MCF 10A (cell line): ENCODE measurements at regions of chr1 and their contacts with region 1.

Region 1: DNA sequence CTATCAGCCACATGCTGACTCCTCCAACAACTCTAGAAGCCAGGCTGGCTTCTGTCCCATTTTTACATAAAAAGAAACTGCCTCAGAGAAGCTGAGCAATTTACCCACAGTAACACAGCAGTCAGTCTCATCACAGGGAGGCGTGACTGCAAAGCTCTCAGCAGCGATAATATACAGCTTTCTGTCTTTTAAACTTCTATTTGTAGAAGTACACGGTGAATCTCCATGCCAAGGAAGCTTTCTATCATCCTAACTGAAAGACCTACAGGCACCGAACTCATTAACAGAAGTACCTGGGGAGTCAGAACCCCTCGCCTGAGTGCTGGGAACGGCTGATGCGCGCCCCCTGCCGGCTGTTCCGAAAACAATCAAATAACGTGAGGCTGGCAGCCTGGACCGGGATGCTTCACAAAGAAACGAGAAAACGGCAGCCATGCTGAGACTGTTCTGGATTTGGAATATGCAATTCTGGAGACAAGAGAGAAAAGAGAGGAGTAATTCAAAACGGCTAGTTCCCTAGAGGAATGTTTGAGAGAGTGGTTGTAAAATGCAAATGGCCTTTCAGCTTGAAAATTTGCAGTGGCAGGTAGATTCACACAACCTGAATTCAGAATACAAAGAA is 43.5 kb upstream of the RAB4A start:
- DNase-seq: peak; percentile 94
- H3K4me3 Mint-ChIP-seq: peak overlapping the region; percentile 5
- H3K27ac Mint-ChIP-seq: peak overlapping the region; percentile 1
- H3K4me1 Mint-ChIP-seq: peaks cover 66% of the 10 kb centered on the region
- H3K27me3 Mint-ChIP-seq: no peaks in the 10 kb centered on the region
- CTCF ChIP-seq: peak; percentile 99

Region 2: DNA sequence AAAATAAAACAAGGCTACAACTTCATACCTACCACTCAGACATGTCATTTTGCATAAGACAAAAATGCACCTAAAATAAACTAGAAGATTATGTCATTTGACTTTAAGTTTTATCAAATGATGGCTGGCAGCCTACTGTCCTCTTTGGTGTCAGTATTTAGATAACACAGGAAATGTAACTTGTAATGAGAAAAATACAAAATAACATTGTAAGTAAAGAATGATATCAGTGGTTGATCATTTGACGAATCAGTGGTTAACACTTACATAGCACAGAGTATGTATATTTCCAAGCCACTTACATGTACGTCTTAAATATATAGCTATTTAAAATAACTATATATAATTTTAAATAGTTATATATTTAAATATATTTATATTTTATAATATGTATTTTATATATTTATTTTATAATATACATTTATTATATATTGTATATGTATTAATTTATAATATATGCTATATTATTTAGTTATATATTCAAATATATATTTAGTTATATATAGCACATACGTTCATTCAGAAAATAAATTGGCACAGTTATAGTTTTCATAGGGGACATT is 1620.0 kb before region 1 on chr1:
- CTCF ChIA-PET with region 1: no interaction called
- POLR2A ChIA-PET with region 1: no interaction called
- intact Hi-C with region 1: no loop called
- DNase-seq: no peak
- H3K4me3 Mint-ChIP-seq: no peak overlapping the region
- H3K27ac Mint-ChIP-seq: no peak overlapping the region
- H3K4me1 Mint-ChIP-seq: no peaks in the 10 kb centered on the region
- H3K27me3 Mint-ChIP-seq: no peaks in the 10 kb centered on the region
- CTCF ChIP-seq: no peak

Region 3: DNA sequence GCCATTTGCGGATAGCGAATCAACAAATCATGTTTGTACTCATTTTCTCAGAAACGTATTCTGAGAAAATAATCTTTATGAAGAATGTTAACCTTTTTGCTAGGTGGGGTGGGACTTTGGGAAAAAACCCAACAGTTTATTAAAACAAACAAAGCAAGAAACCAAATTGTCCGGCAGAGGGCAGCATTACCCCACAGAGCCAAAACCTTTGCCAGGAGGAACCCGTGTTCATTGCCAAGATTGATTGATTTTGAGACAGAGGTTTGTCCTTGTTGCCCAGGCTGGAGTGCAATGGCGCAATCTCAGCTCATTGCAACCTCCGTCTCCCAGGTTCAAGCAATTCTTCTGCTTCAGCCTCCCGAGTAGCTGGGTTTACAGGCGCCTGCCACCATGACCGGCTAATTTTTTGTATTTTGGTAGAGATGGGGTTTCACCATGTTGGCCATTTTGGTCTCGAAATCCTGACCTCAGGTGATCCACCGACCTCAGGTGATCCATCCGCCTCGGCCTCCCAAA is 563.0 kb before region 1 on chr1:
- CTCF ChIA-PET with region 1: interaction called, 94 read pairs
- POLR2A ChIA-PET with region 1: interaction called, 7 read pairs
- intact Hi-C with region 1: loop called (anchors 1 kb)
- DNase-seq: peak; percentile 96
- H3K4me3 Mint-ChIP-seq: no peak overlapping the region
- H3K27ac Mint-ChIP-seq: no peak overlapping the region
- H3K4me1 Mint-ChIP-seq: no peaks in the 10 kb centered on the region
- H3K27me3 Mint-ChIP-seq: no peaks in the 10 kb centered on the region
- CTCF ChIP-seq: peak; percentile 99

Region 4: GRCh38 chr1:228830954-228831481 is 396.4 kb before region 1 on chr1:
- CTCF ChIA-PET with region 1: interaction called, 18 read pairs
- POLR2A ChIA-PET with region 1: interaction called, 3 read pairs
- intact Hi-C with region 1: loop called (anchors 10 kb)
- DNase-seq: peak; percentile 91
- H3K4me3 Mint-ChIP-seq: no peak overlapping the region
- H3K27ac Mint-ChIP-seq: peak overlapping the region; percentile 24
- H3K4me1 Mint-ChIP-seq: peaks cover 8% of the 10 kb centered on the region
- H3K27me3 Mint-ChIP-seq: peaks cover 51% of the 10 kb centered on the region
- CTCF ChIP-seq: no peak

Region 5: DNA sequence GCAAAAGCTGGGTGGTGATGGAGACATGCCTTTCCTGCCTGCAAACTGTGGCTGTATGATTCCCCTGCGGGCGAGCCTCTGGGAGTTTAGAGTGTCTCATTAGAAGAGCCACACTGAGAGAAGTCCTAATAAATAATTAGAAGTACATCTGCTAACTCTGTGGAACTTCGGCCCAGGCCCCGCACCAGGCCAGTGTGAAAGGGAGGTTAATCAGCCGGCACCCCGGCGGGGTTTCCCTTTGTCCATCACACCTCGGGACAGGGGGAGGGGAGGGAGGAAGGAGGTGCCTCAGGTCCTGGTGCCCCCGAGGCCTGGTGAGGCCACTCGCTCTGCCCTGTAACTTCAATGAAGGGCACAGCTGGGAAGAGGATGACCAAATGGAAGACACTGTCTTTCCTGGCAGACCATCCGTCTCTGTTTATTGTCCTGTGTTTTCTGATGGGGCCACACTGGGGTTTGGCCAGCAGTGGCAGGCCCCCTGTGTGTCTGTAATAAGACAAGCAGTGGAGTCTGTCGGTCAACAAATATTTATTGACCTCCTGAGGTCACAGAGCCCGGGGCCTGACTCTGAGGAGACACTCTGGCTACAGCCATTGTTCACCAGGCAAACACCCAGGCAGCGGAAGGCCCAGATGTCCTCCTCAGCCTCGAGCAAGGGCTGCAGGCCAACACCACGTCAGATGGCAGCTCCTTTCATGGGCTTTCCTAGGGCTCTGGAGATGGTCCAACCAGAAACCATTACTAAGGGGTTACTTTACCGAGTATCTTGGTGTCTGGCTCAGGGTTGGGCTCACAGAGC is 224.0 kb before region 1 on chr1:
- CTCF ChIA-PET with region 1: interaction called, 7 read pairs
- POLR2A ChIA-PET with region 1: interaction called, 4 read pairs
- intact Hi-C with region 1: loop called (anchors 5 kb)
- DNase-seq: peak; percentile 56
- H3K4me3 Mint-ChIP-seq: no peak overlapping the region
- H3K27ac Mint-ChIP-seq: no peak overlapping the region
- H3K4me1 Mint-ChIP-seq: peaks cover 19% of the 10 kb centered on the region
- H3K27me3 Mint-ChIP-seq: no peaks in the 10 kb centered on the region
- CTCF ChIP-seq: no peak

Region 6: GRCh38 chr1:229156872-229157271 is 70.5 kb before region 1 on chr1:
- CTCF ChIA-PET with region 1: interaction called, 30 read pairs
- POLR2A ChIA-PET with region 1: interaction called, 4 read pairs
- intact Hi-C with region 1: no loop called
- DNase-seq: peak; percentile 54
- H3K4me3 Mint-ChIP-seq: no peak overlapping the region
- H3K27ac Mint-ChIP-seq: no peak overlapping the region
- H3K4me1 Mint-ChIP-seq: no peaks in the 10 kb centered on the region
- H3K27me3 Mint-ChIP-seq: no peaks in the 10 kb centered on the region
- CTCF ChIP-seq: peak; percentile 58

Region 7: GRCh38 chr1:229238674-229239415 is 11.4 kb after region 1 on chr1:
- CTCF ChIA-PET with region 1: interaction called, 68 read pairs
- POLR2A ChIA-PET with region 1: interaction called, 88 read pairs
- intact Hi-C with region 1: no loop called
- DNase-seq: peak; percentile 78
- H3K4me3 Mint-ChIP-seq: no peak overlapping the region
- H3K27ac Mint-ChIP-seq: peak overlapping the region; percentile 92
- H3K4me1 Mint-ChIP-seq: peaks cover 20% of the 10 kb centered on the region
- H3K27me3 Mint-ChIP-seq: no peaks in the 10 kb centered on the region
- CTCF ChIP-seq: no peak

Region 8: DNA sequence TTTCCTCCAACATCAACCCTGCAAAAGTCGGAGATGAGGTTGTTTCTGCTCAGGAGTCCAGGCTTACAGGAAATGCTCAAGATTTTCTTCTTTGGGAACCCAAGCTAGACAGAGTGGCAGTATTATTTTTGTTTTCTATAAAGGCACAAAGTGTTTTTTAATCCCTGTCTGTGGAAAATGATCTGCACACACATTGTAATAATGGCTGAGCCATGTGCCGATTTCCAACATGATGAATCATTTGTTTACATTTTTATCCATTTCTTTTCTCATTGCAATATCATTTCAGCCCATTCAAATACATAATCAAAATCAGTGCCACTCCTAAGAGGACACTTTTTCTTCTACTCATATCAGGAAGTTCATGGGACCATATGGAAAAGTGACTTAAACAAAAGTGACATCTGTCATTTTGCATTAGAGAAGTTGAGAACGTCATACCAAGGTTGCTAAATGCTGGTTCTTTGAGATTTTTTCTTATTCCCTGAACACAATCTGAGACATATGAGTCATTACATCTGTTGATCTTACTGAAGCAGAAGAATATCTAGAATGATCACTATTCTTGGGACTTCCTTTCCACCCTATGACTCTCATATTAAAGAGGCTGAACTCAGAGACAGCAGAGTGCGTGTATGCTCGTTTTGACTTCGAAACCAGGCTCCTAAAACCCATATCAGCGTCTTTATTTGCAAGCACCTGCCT is 161.6 kb after region 1 on chr1:
- CTCF ChIA-PET with region 1: no interaction called
- POLR2A ChIA-PET with region 1: no interaction called
- intact Hi-C with region 1: no loop called
- DNase-seq: peak; percentile 64
- H3K4me3 Mint-ChIP-seq: peak overlapping the region; percentile 10
- H3K27ac Mint-ChIP-seq: peak overlapping the region; percentile 40
- H3K4me1 Mint-ChIP-seq: peaks cover 14% of the 10 kb centered on the region
- H3K27me3 Mint-ChIP-seq: no peaks in the 10 kb centered on the region
- CTCF ChIP-seq: no peak

Region 9: GRCh38 chr1:229507951-229508822 is 280.8 kb after region 1 on chr1 and contains the start of gene NUP133:
- CTCF ChIA-PET with region 1: interaction called, 3 read pairs
- POLR2A ChIA-PET with region 1: interaction called, 22 read pairs
- intact Hi-C with region 1: no loop called
- DNase-seq: peak; percentile 100
- H3K4me3 Mint-ChIP-seq: peak within 1 kb of the TSS; percentile 88
- H3K27ac Mint-ChIP-seq: peak within 1 kb of the TSS; percentile 99
- H3K4me1 Mint-ChIP-seq: peaks cover 13% of the 10 kb centered on the region
- H3K27me3 Mint-ChIP-seq: no peaks in the 10 kb centered on the region
- CTCF ChIP-seq: no peak
- total RNA-seq, gene NUP133: 65.2 and 67.3 TPM in 2 replicates